ENCODE measurements at regions of chr9 and their contacts with region 1.

Region 1: GRCh38 chr9:119533504-119533903 is 164.3 kb upstream of the BRINP1 start:
- DNase-seq: no peak
- ATAC-seq: peak; percentile 59
- H3K4me3 Mint-ChIP-seq: no peak overlapping the region
- H3K27ac Mint-ChIP-seq: no peak overlapping the region
- H3K4me1 Mint-ChIP-seq: peaks cover 13% of the 10 kb centered on the region
- H3K27me3 Mint-ChIP-seq: no peaks in the 10 kb centered on the region
- CTCF ChIP-seq: no peak

Region 2: GRCh38 chr9:119556129-119556875 is 22.8 kb after region 1 on chr9:
- CTCF ChIA-PET with region 1: interaction called, 15 read pairs
- POLR2A ChIA-PET with region 1: no interaction called
- DNase-seq: peak; percentile 88
- ATAC-seq: peak; percentile 93
- H3K4me3 Mint-ChIP-seq: peak overlapping the region; percentile 61
- H3K27ac Mint-ChIP-seq: peak overlapping the region; percentile 30; the same call in 1 of the 2 replicates
- H3K4me1 Mint-ChIP-seq: peaks cover 13% of the 10 kb centered on the region
- H3K27me3 Mint-ChIP-seq: peaks cover 3% of the 10 kb centered on the region; the same call in 1 of the 2 replicates
- CTCF ChIP-seq: peak; percentile 88

Measured in WTC11 (cell line).